Sigmoid colon (tissue), 7 donors: ENCODE measurements at regions of chr15 and their contacts with region 1.

Region 1: GRCh38 chr15:59725172-59725486 is 36.0 kb upstream of the BNIP2 start:
- DNase-seq: no peak
- H3K4me3 ChIP-seq: no peak overlapping the region
- H3K27ac ChIP-seq: no peak overlapping the region
- H3K4me1 ChIP-seq: no peaks in the 10 kb centered on the region
- H3K27me3 ChIP-seq: peaks cover 0 to 8% (median 0%) of the 10 kb centered on the region in 3 donors
- CTCF ChIP-seq: no peak
- EP300 ChIP-seq: no peak
- POLR2A ChIP-seq: no peak

Region 2: DNA sequence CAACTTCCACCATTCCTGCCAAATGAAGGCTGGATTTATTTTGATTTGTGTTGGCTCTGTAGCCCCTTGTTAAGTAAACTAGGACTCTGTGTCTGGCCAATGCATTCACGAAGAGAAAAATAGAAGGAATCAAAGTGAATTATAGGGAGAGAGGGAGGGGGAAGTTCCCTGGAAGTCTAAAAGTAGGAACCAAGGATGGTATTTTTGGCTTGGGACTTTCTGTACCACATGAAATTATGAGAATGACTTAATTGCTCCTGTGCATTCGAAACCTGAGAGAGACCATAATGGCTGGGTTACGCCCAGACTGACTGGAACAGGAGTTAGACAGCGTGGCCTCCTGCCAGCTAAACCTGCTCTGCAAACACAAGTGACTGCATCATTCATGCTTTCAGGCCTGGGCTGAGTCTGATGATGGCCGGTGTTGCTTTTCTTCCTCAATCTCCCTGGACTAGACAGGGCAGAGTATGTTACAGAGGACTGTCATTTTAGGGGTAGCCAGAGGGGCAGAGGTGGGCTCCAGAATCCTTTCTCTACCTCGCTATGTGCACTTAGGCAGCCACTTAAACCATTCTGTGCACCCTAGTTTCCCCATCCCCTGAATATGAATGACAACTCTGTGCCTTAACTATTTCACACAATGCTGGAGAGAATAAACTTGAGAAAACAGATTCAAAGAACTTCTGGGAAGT is 411.3 kb before region 1 on chr15:
- intact Hi-C with region 1: no loop called
- DNase-seq: peak; percentile 80
- H3K4me3 ChIP-seq: no peak overlapping the region
- H3K27ac ChIP-seq: peak overlapping the region in 2 of 4 donors; percentile 50 to 62
- H3K4me1 ChIP-seq: peaks cover 0 to 37% (median 29%) of the 10 kb centered on the region in 4 donors
- H3K27me3 ChIP-seq: no peaks in the 10 kb centered on the region
- CTCF ChIP-seq: no peak
- EP300 ChIP-seq: peak in 1 of 4 donors; percentile 43
- POLR2A ChIP-seq: no peak

Region 3: DNA sequence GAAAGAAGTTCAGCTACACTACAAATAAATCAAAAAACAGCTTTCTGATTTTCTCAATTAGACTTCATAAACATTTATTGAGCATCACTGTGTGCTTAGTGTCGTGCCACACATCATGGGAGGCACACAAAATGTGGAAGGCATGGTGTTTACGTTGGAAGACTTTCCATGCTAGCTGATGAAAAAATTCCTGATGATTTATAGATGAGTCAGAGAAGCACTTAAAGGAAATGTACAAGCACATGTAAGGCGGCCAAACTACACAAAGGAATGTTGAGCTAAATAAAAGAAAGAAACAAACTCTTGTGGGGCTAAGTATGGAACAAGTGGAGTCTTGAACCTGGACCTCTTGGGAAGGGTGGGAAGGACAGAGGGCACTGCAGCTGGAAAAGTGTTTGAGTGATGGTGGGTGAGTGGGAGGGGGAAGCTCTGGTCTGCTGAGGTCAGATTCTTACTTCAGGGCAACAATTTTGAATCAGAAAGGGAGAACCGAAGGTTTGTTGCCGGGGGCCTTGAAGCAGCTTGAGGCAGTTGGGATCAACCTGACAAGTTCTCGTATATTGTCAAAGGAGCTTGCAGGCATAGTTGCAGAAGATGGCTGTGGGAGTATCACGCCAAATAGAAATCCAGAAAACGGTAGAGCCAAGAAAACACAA is 345.8 kb after region 1 on chr15:
- intact Hi-C with region 1: no loop called
- DNase-seq: no peak
- H3K4me3 ChIP-seq: no peak overlapping the region
- H3K27ac ChIP-seq: no peak overlapping the region
- H3K4me1 ChIP-seq: no peaks in the 10 kb centered on the region
- H3K27me3 ChIP-seq: no peaks in the 10 kb centered on the region
- CTCF ChIP-seq: no peak
- EP300 ChIP-seq: no peak
- POLR2A ChIP-seq: no peak

Region 4: DNA sequence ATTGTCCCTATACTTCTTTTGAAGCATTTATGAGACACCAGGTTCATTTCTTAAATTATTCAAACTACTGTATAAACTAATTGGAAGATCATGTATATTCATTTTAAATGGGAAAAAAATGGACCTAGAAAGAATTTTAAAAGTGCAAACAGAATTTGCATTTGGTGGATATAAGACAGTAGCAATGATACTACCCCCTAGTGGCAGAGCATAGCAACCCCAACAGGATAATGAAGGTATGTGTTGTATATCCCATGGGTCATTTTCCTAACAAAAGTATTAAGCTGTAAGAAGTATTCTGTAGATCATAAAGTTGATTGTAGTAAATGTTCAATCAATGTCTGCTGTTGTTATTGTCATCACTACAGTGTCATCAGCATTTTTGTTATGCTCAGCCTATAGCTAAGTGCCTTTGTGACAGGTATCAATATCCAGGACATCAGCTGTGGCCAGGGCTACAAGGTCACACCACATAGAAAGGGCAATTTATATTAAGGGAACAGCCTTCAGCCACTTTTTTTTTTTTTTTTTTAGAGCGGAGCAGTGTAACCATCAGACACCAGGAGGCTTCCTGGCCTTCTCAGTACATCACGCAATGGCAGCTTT is 454.8 kb after region 1 on chr15:
- intact Hi-C with region 1: loop called (anchors 10 kb)
- DNase-seq: no peak
- H3K4me3 ChIP-seq: no peak overlapping the region
- H3K27ac ChIP-seq: no peak overlapping the region
- H3K4me1 ChIP-seq: no peaks in the 10 kb centered on the region
- H3K27me3 ChIP-seq: no peaks in the 10 kb centered on the region
- CTCF ChIP-seq: peak in 2 of 4 experiments; percentile 48 to 74
- EP300 ChIP-seq: no peak
- POLR2A ChIP-seq: no peak

Region 5: GRCh38 chr15:60326824-60327654 is 601.9 kb after region 1 on chr15:
- intact Hi-C with region 1: loop called (anchors 10 kb)
- DNase-seq: no peak
- H3K4me3 ChIP-seq: no peak overlapping the region
- H3K27ac ChIP-seq: no peak overlapping the region
- H3K4me1 ChIP-seq: no peaks in the 10 kb centered on the region
- H3K27me3 ChIP-seq: peaks cover 10 to 60% (median 25%) of the 10 kb centered on the region in 3 donors
- CTCF ChIP-seq: peak; percentile 9 to 58 (median 42)
- EP300 ChIP-seq: no peak
- POLR2A ChIP-seq: no peak